Astrocyte of the cerebellum (primary cell): ENCODE measurements at regions of chr22 and their contacts with region 1.

Region 1: DNA sequence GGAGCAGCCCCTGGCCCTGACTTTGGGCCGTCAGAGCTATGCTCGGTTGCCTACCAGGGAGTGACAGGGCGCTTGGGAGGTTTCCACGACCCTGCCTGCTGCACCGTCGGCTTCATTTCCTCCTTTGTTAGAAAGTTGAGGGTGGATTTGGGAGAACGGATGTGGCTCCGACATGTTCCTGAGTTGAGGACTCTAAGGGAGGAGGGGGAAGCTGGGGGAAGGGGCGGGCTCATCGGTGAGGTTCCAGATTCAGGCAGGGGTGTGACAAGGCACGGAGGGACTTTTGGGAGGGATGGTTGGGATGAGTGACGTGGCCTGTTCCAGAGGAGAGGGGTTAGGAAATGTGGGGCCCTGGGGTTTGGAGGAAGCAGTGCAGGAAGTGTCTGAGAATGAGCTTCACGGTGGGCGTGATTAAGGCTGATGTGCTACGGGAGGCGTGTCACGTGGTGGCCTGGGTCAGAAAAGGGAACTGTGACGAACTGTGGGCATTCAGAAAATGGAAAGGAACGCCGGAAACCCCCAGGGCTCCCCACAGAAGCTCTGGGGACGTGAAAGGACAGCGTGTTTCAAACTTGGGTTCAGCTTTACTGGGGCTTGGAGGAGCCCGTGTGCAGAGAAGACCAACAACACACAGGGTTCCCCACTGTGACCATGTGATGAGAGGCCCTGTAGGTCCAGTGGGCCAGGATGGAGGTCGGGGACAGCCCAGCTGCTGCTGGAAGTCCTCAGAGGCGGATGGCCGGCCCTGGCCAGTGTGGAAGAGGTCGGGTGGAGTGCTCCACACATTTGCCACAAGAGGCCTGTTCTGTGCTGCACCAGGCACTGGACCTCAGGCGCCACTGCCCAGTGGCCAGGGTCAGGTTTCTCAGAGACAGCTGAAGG is 2.8 kb downstream of the PARVB start:
- DNase-seq: no peak
- H3K4me3 ChIP-seq: no peak overlapping the region
- CTCF ChIP-seq: no peak

Region 2: GRCh38 chr22:44151676-44152075 is 124.8 kb after region 1 on chr22:
- in situ Hi-C with region 1: no loop called
- DNase-seq: peak; percentile 79
- H3K4me3 ChIP-seq: no peak overlapping the region
- CTCF ChIP-seq: no peak

Region 3: GRCh38 chr22:44586999-44587736 is 560.3 kb after region 1 on chr22:
- in situ Hi-C with region 1: loop called (anchors 25 kb)
- DNase-seq: peak; percentile 32
- H3K4me3 ChIP-seq: no peak overlapping the region
- CTCF ChIP-seq: no peak